B cell (primary cell): ENCODE measurements at regions of chr17 and their contacts with region 1.

Region 1: DNA sequence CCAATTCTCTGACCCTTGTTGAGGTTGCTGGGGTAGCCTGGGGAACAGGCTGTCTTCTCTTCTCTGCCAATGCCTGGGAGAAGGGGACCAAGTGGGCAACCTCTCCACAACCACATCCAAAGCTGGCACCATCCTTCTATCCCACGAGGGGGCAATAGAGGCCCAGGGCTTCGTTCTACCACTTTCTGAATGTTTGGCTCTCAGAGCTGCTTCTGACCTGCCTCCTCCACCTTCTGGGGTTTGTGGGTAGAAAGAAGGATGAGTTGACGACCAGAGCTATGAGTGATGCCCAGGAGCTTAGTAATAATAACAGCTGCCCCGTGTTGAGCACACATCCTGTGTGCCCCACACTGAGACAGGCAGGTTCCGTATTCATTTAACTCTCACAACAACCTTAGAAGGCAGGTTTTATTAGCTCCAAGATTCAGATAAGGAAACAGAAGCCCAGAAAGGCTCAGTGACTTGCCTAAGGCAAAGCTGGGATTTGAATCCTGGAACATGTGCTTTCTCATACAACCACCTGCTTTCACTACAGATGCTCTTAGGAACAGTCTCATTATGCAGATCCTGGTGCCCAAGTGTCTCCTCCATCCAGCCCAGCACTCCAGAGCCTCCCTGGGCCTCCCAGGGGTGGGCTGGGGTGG is 11.1 kb downstream of the TSPOAP1 start:
- DNase-seq: peak; percentile 87
- ATAC-seq: peak; percentile 97
- H3K4me3 ChIP-seq: no peak overlapping the region
- H3K4me3 Mint-ChIP-seq: peak overlapping the region; percentile 33
- H3K27ac ChIP-seq: peak overlapping the region; percentile 53 to 76
- H3K27ac Mint-ChIP-seq: peak overlapping the region; percentile 96
- H3K4me1 ChIP-seq: peaks cover 11 to 12% of the 10 kb centered on the region in 2 donors
- H3K4me1 Mint-ChIP-seq: peaks cover 14% of the 10 kb centered on the region
- H3K27me3 ChIP-seq: no peaks in the 10 kb centered on the region
- H3K27me3 Mint-ChIP-seq: no peaks in the 10 kb centered on the region
- CTCF ChIP-seq: peak; percentile 84

Region 2: GRCh38 chr17:57675427-57676398 is 641.8 kb before region 1 on chr17:
- CTCF ChIA-PET with region 1: no interaction called
- POLR2A ChIA-PET with region 1: no interaction called
- intact Hi-C with region 1: no loop called
- DNase-seq: no peak
- ATAC-seq: no peak
- H3K4me3 ChIP-seq: no peak overlapping the region
- H3K4me3 Mint-ChIP-seq: no peak overlapping the region
- H3K27ac ChIP-seq: no peak overlapping the region
- H3K27ac Mint-ChIP-seq: no peak overlapping the region
- H3K4me1 ChIP-seq: no peaks in the 10 kb centered on the region
- H3K4me1 Mint-ChIP-seq: peaks cover 6% of the 10 kb centered on the region
- H3K27me3 ChIP-seq: no peaks in the 10 kb centered on the region
- H3K27me3 Mint-ChIP-seq: no peaks in the 10 kb centered on the region
- CTCF ChIP-seq: no peak

Region 3: GRCh38 chr17:58249270-58250133 is 68.0 kb before region 1 on chr17:
- CTCF ChIA-PET with region 1: interaction called, 16 read pairs
- POLR2A ChIA-PET with region 1: no interaction called
- intact Hi-C with region 1: no loop called
- DNase-seq: peak; percentile 87
- ATAC-seq: peak; percentile 98
- H3K4me3 ChIP-seq: peak overlapping the region in 4 of 5 experiments; percentile 60 to 66 (median 62)
- H3K4me3 Mint-ChIP-seq: peak overlapping the region; percentile 92
- H3K27ac ChIP-seq: no peak overlapping the region
- H3K27ac Mint-ChIP-seq: peak overlapping the region; percentile 68
- H3K4me1 ChIP-seq: peaks cover 14 to 18% of the 10 kb centered on the region in 2 donors
- H3K4me1 Mint-ChIP-seq: peaks cover 19% of the 10 kb centered on the region
- H3K27me3 ChIP-seq: peaks cover 0 to 36% (median 8%) of the 10 kb centered on the region in 4 experiments
- H3K27me3 Mint-ChIP-seq: peaks cover 17% of the 10 kb centered on the region
- CTCF ChIP-seq: peak; percentile 99

Region 4: DNA sequence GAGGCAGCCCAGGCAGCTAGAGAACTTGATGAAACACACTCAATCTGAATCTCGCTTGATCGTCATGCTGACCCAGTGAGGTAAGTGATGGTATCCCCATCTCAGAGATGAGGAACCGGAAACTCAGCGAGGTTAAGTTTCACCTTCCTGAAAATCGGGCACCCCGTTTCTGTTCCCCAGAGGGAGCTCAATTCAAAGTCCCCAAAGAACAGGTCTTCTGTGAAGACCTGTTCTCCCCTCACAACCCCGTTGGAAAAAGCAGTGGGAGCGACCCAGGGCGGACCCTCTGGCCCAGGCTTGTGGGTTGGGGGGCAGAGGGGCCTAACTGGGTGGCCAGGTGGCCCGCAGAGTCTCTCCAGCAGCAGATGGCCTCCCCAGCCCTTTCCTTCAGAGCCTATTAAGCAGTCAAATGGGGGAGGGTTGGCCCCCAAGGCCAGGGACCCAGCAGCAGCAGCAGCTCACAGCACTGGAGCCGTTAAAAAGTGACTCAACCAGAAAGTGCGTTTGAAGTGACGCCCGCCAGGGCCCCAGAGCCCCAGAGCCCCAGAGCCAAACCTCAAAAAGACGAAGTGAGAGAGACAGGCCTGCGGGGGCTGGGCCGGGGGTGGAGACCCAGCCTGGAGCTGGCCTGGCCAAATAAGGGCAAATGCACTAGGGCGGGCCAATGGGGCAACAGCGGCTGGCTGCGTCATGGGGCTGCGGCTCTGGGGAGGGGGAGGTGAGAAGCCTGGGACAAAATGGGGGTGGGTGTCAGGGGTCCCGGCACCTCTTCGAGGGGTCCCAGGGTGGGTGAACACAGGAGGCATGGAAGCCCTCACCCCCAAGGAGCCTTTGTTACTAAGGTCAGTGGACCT is 20.3 kb after region 1 on chr17:
- CTCF ChIA-PET with region 1: interaction called, 587 read pairs
- POLR2A ChIA-PET with region 1: interaction called, 663 read pairs
- intact Hi-C with region 1: no loop called
- DNase-seq: peak; percentile 95
- ATAC-seq: peak; percentile 67
- H3K4me3 ChIP-seq: peak overlapping the region; percentile 75 to 100 (median 99)
- H3K4me3 Mint-ChIP-seq: peak overlapping the region; percentile 91
- H3K27ac ChIP-seq: peak overlapping the region; percentile 99 to 100
- H3K27ac Mint-ChIP-seq: peak overlapping the region; percentile 98
- H3K4me1 ChIP-seq: peaks cover 85 to 100% of the 10 kb centered on the region in 2 donors
- H3K4me1 Mint-ChIP-seq: peaks cover 88% of the 10 kb centered on the region
- H3K27me3 ChIP-seq: no peaks in the 10 kb centered on the region
- H3K27me3 Mint-ChIP-seq: no peaks in the 10 kb centered on the region
- CTCF ChIP-seq: peak; percentile 31

Region 5: GRCh38 chr17:58375256-58375655 is 57.7 kb after region 1 on chr17:
- CTCF ChIA-PET with region 1: interaction called, 65 read pairs
- POLR2A ChIA-PET with region 1: interaction called, 3 read pairs
- intact Hi-C with region 1: loop called (anchors 1 kb)
- DNase-seq: no peak
- ATAC-seq: no peak
- H3K4me3 ChIP-seq: no peak overlapping the region
- H3K4me3 Mint-ChIP-seq: no peak overlapping the region
- H3K27ac ChIP-seq: no peak overlapping the region
- H3K27ac Mint-ChIP-seq: no peak overlapping the region
- H3K4me1 ChIP-seq: peaks cover 3 to 13% of the 10 kb centered on the region in 2 donors
- H3K4me1 Mint-ChIP-seq: peaks cover 17% of the 10 kb centered on the region
- H3K27me3 ChIP-seq: no peaks in the 10 kb centered on the region
- H3K27me3 Mint-ChIP-seq: no peaks in the 10 kb centered on the region
- CTCF ChIP-seq: no peak

Region 6: GRCh38 chr17:58427807-58428206 is 110.3 kb after region 1 on chr17:
- CTCF ChIA-PET with region 1: interaction called, 15 read pairs
- POLR2A ChIA-PET with region 1: no interaction called
- intact Hi-C with region 1: no loop called
- DNase-seq: no peak
- ATAC-seq: no peak
- H3K4me3 ChIP-seq: no peak overlapping the region
- H3K4me3 Mint-ChIP-seq: peak overlapping the region; percentile 59
- H3K27ac ChIP-seq: no peak overlapping the region
- H3K27ac Mint-ChIP-seq: peak overlapping the region; percentile 37
- H3K4me1 ChIP-seq: no peaks in the 10 kb centered on the region
- H3K4me1 Mint-ChIP-seq: peaks cover 5% of the 10 kb centered on the region
- H3K27me3 ChIP-seq: no peaks in the 10 kb centered on the region
- H3K27me3 Mint-ChIP-seq: no peaks in the 10 kb centered on the region
- CTCF ChIP-seq: no peak

Region 7: GRCh38 chr17:58487589-58488427 is 170.3 kb after region 1 on chr17 and contains the start of gene HSF5:
- CTCF ChIA-PET with region 1: interaction called, 51 read pairs
- POLR2A ChIA-PET with region 1: interaction called, 11 read pairs
- intact Hi-C with region 1: loop called (anchors 1 kb)
- DNase-seq: peak; percentile 92
- ATAC-seq: peak; percentile 94
- H3K4me3 ChIP-seq: peak within 1 kb of the TSS in 4 of 5 experiments; percentile 40 to 60 (median 56)
- H3K4me3 Mint-ChIP-seq: peak within 1 kb of the TSS; percentile 86
- H3K27ac ChIP-seq: peak within 1 kb of the TSS; percentile 13 to 79
- H3K27ac Mint-ChIP-seq: peak within 1 kb of the TSS; percentile 83
- H3K4me1 ChIP-seq: peaks cover 6 to 11% of the 10 kb centered on the region in 2 donors
- H3K4me1 Mint-ChIP-seq: peaks cover 11% of the 10 kb centered on the region
- H3K27me3 ChIP-seq: no peaks in the 10 kb centered on the region
- H3K27me3 Mint-ChIP-seq: no peaks in the 10 kb centered on the region
- CTCF ChIP-seq: peak; percentile 81
- total RNA-seq, gene HSF5: 4.8 and 5.1 TPM in 2 replicates